Activated CD4-positive, alpha-beta T cell treated with anti-CD3 and anti-CD28 coated beads, Interleukin-2, amount 10 ng/mL, durations not matched to agents 7 days and 5 days (primary cell): ENCODE measurements at regions of chr19 and their contacts with region 1.

Region 1: GRCh38 chr19:48255376-48256303 is at the start of gene CARD8:
- DNase-seq: peak; percentile 89
- H3K4me3 Mint-ChIP-seq: peak within 1 kb of the TSS; percentile 99
- H3K27ac Mint-ChIP-seq: peak within 1 kb of the TSS; percentile 99
- H3K4me1 Mint-ChIP-seq: peaks cover 73% of the 10 kb centered on the region
- H3K27me3 Mint-ChIP-seq: no peaks in the 10 kb centered on the region
- total RNA-seq, gene CARD8: 174 to 189 TPM

Region 2: DNA sequence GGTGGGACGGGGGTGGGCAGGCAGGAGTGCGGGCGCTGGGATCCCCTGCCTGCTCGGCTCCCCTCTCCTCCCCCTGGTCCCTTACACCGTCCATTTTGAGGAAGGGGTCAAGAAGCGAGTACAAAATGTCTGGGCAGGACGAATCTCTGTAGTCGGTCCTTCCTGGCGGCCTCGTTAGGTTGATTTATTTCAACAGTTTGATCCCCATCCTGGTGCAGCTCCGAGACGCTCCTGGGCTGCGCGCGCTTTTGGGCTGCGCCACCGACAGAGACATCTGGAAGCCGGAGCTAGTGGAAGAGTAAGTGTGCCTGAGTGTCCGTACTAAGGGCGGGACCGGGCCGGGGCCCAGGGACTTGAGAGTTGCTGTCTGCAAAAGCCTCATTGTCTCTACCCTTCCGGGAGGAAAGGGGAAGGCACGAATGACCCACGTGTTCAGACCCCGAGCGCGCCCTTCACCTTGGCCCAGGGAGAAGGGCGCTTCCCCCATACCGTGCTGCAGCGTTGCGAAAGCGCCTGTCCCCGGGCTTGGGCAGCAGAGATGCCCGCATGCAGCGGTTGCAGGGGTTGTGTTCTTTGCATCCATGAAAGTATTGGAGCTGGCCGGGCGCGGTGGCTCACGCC is 16.0 kb after region 1 on chr19:
- CTCF ChIA-PET with region 1: interaction called, 18 read pairs
- POLR2A ChIA-PET with region 1: no interaction called
- DNase-seq: no peak
- H3K4me3 Mint-ChIP-seq: peak overlapping the region; percentile 66
- H3K27ac Mint-ChIP-seq: peak overlapping the region; percentile 31
- H3K4me1 Mint-ChIP-seq: peaks cover 18% of the 10 kb centered on the region
- H3K27me3 Mint-ChIP-seq: peaks cover 25% of the 10 kb centered on the region

Region 3: GRCh38 chr19:48321622-48322591 is 66.3 kb after region 1 on chr19:
- CTCF ChIA-PET with region 1: interaction called, 12 read pairs
- POLR2A ChIA-PET with region 1: no interaction called
- DNase-seq: peak; percentile 99
- H3K4me3 Mint-ChIP-seq: peak overlapping the region; percentile 87
- H3K27ac Mint-ChIP-seq: peak overlapping the region; percentile 98
- H3K4me1 Mint-ChIP-seq: peaks cover 61% of the 10 kb centered on the region
- H3K27me3 Mint-ChIP-seq: no peaks in the 10 kb centered on the region